Motor neuron (in vitro differentiated cells): ENCODE measurements at regions of chr21 and their contacts with region 1.

Region 1: DNA sequence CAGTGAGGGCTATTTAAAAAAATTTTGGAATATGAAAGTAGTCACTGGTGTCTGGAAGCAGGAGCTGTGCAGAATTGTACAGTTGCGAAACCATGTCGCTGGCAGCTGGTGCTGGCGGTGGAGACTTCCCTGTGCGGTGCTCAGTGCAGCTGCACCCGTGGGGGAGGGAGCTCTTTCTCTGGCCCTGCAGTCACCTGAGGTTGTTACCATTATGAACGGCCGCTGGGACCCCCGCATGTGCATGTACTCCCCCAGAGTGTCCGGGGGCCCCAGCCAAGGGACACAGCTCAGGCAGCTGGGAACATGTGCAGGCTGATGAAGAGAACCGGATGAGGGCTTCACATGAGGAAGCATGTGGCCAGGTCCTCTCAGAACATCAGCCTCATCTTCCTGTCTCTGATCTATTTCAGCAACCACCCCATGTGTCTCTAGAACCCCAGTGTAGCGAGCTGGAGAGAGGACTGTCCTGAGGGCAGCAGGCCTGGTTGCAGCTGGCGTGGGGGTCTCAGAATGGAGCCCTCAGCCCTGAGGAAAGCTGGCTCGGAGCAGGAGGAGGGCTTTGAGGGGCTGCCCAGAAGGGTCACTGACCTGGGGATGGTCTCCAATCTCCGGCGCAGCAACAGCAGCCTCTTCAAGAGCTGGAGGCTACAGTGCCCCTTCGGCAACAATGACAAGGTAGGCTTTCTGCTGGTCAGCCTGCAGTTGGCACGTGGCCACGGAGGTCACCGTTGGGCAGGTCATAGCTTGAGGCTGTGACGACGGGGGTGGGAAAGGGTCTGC is at the start of gene TRPM2:
- ATAC-seq: peak in 2 of 8 experiments; percentile 26 to 48
- H3K4me3 ChIP-seq: no peak within 1 kb of the TSS
- H3K27ac ChIP-seq: no peak within 1 kb of the TSS
- H3K4me1 ChIP-seq: peaks cover 0 to 4% of the 10 kb centered on the region in 2 donors
- total RNA-seq, gene TRPM2: 0.05 to 0.35 (median 0.15) TPM

Region 2: DNA sequence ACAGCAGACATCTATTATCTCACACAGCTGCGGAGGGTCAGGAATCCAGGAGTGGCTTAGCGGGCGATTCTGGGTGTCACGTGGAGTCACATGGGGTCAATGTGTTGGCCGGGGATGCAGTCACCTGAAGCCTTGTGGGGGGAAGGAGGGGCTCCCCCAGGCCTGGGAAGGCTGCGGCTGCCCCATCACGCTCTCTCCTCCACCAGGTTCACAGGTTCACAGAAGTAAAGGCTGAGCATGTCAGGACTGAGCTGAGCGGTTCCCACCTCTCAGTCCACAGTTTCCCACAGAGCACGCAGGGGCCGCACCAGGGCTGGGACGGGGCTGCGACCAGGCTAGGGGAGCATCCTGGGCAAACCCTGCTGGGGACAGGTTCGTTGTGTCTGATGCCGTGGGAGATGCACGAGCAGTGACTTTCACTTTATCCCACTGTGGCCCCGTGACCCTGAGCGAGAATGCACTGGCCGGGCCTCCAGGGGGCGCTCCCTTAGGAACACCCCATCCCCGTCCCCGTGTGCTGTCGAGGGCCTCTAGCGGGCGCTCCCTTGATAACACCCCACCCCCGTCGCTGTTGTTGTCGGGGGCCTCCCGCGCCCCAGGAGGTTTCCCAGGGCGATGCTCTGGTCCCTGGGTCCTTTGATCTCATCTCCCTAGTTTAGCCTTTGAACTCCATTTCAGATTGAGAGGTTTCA is 414.5 kb before region 1 on chr21:
- in situ Hi-C with region 1: no loop called
- ATAC-seq: peak; percentile 75 to 97 (median 84)
- H3K4me3 ChIP-seq: no peak overlapping the region
- H3K27ac ChIP-seq: no peak overlapping the region
- H3K4me1 ChIP-seq: peaks cover under 1 to 3% of the 10 kb centered on the region in 2 donors

Region 3: GRCh38 chr21:44478124-44478800 is 124.9 kb after region 1 on chr21:
- in situ Hi-C with region 1: loop called in 1 of 9 experiments (anchors 10 kb)
- ATAC-seq: no peak
- H3K4me3 ChIP-seq: no peak overlapping the region
- H3K27ac ChIP-seq: no peak overlapping the region
- H3K4me1 ChIP-seq: no peaks in the 10 kb centered on the region

Region 4: GRCh38 chr21:44547656-44548331 is 194.4 kb after region 1 on chr21:
- in situ Hi-C with region 1: no loop called
- ATAC-seq: peak in 4 of 8 experiments; percentile 27 to 70 (median 30)
- H3K4me3 ChIP-seq: no peak overlapping the region
- H3K27ac ChIP-seq: no peak overlapping the region
- H3K4me1 ChIP-seq: peaks cover 12 to 45% of the 10 kb centered on the region in 2 donors

Region 5: DNA sequence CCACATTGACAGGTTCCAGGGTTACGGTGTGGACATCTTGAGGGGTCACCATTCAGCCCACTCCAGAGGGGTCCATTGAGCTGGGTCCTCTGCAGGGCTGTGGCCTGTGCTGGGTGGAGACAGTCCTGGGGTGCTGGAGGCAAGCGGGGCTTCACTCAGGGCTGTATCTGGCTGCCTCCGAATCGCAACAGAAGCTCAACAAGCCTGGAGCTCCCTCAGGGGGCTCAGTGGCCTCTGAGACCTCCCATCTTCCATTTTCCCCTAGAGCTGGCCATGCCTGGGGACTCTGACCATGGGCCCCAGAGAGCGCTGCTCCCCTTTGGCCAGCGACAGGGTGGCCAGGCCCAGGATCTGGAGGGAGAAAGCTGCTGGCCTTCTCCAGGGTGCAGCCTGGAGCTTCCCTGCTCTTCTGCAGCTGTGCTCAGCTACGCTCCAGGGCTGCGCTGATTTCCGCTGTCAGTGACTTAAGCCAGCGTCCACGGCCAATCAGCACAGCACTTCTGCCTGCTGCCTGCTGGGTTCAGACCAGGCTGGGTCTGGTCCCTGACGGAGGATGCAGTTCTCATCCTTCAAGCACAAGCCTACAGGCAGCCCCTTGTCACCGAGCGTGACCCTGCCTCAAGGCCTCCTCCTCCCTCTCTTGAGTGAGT is 676.0 kb after region 1 on chr21:
- in situ Hi-C with region 1: no loop called
- ATAC-seq: peak in 7 of 8 experiments; percentile 53 to 93 (median 89)
- H3K4me3 ChIP-seq: no peak overlapping the region
- H3K27ac ChIP-seq: peak overlapping the region in 1 of 2 donors; percentile 60
- H3K4me1 ChIP-seq: peaks cover 46 to 47% of the 10 kb centered on the region in 2 donors

Region 6: GRCh38 chr21:46368533-46369285 is 2015.3 kb after region 1 on chr21:
- in situ Hi-C with region 1: no loop called
- ATAC-seq: no peak
- H3K4me3 ChIP-seq: no peak overlapping the region
- H3K27ac ChIP-seq: no peak overlapping the region
- H3K4me1 ChIP-seq: no peaks in the 10 kb centered on the region